H1 (cell line): ENCODE measurements at regions of chr22 and their contacts with region 1.

Region 1: GRCh38 chr22:44718418-44718817 is 16.4 kb downstream of the PRR5 start:
- DNase-seq: no peak
- H3K4me3 ChIP-seq: no peak overlapping the region
- H3K27ac ChIP-seq: no peak overlapping the region
- H3K4me1 ChIP-seq: peaks cover 0 to 8% (median 3%) of the 10 kb centered on the region in 4 experiments; a peak in 6 of 7 replicates
- H3K27me3 ChIP-seq: no peaks in the 10 kb centered on the region
- CTCF ChIP-seq: no peak
- EP300 ChIP-seq: no peak
- POLR2A ChIP-seq: no peak
- RAD21 ChIP-seq: no peak

Region 2: DNA sequence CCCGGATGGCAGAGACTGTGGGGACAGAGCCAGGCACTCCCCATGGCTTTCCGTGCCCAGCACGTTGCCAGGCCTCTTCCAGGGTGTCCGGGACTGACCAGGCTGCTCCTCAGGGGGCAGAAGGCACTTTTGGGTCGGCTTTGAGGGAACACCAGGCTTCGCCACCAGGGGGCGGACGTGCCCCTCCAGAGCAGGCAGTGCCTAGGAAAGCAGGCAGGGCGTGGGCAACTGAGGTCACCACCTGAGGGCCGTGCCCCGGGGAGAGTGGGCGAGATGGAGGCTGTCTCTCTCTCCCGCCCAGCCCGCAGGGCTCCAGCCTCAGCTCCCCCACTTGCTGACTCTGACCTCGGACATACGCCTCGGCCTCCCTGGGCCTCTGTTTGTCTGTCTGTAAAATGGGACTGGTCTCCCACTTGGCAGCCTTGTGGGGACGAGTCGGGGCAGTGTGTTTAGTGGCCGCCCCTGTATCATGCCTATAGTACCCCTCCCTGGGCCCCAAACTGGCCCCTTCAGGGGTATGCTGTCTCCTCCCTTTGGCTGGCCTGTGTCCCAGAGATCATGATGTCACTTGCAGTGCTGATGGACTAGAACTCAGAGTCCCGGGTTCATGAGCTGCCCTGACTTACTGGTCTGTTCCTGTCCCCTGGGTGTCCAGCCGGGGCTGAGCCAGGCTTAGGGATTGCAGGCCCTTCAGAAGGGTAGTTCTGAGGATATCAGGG is 20.8 kb before region 1 on chr22:
- CTCF ChIA-PET with region 1: interaction called, 11 read pairs
- POLR2A ChIA-PET with region 1: interaction called, 3 read pairs
- DNase-seq: peak; percentile 75 to 98
- H3K4me3 ChIP-seq: no peak overlapping the region
- H3K27ac ChIP-seq: no peak overlapping the region
- H3K4me1 ChIP-seq: peaks cover 0 to 16% (median 10%) of the 10 kb centered on the region in 4 experiments; a peak in 6 of 7 replicates
- H3K27me3 ChIP-seq: peaks cover 0 to 13% (median 9%) of the 10 kb centered on the region in 4 experiments; a peak in 6 of 7 replicates
- CTCF ChIP-seq: peak; percentile 97 to 98 (median 98)
- EP300 ChIP-seq: no peak
- POLR2A ChIP-seq: no peak
- RAD21 ChIP-seq: peak; percentile 92 to 96